ENCODE measurements at regions of chr4 and their contacts with region 1.

Region 1: GRCh38 chr4:109702950-109703663 is at the start of gene CASP6:
- DNase-seq: peak; percentile 62 to 90 (median 73)
- ATAC-seq: peak; percentile 90
- H3K4me3 ChIP-seq: peak within 1 kb of the TSS; percentile 80
- H3K4me3 Mint-ChIP-seq: peak within 1 kb of the TSS; percentile 97
- H3K27ac ChIP-seq: peak within 1 kb of the TSS; percentile 39 to 60
- H3K27ac Mint-ChIP-seq: peak within 1 kb of the TSS; percentile 96
- H3K4me1 ChIP-seq: peaks cover 33% of the 10 kb centered on the region
- H3K4me1 Mint-ChIP-seq: peaks cover 50% of the 10 kb centered on the region
- H3K27me3 ChIP-seq: no peaks in the 10 kb centered on the region
- H3K27me3 Mint-ChIP-seq: no peaks in the 10 kb centered on the region
- CTCF ChIP-seq: peak; percentile 78
- total RNA-seq, gene CASP6: 5.4 to 5.5 TPM

Region 2: GRCh38 chr4:109690690-109691410 is 12.3 kb before region 1 on chr4:
- CTCF ChIA-PET with region 1: interaction called, 3 read pairs
- POLR2A ChIA-PET with region 1: interaction called, 17 read pairs
- intact Hi-C with region 1: no loop called
- DNase-seq: peak in 4 of 14 experiments; percentile 15 to 73 (median 32)
- ATAC-seq: peak; percentile 88
- H3K4me3 ChIP-seq: no peak overlapping the region
- H3K4me3 Mint-ChIP-seq: peak overlapping the region; percentile 68
- H3K27ac ChIP-seq: peak overlapping the region; percentile 36 to 52
- H3K27ac Mint-ChIP-seq: peak overlapping the region; percentile 89
- H3K4me1 ChIP-seq: peaks cover 20% of the 10 kb centered on the region
- H3K4me1 Mint-ChIP-seq: peaks cover 42% of the 10 kb centered on the region
- H3K27me3 ChIP-seq: no peaks in the 10 kb centered on the region
- H3K27me3 Mint-ChIP-seq: no peaks in the 10 kb centered on the region
- CTCF ChIP-seq: no peak

Region 3: GRCh38 chr4:109815151-109816081 is 112.3 kb after region 1 on chr4 and contains the start of gene GAR1:
- CTCF ChIA-PET with region 1: interaction called, 3 read pairs
- POLR2A ChIA-PET with region 1: interaction called, 3 read pairs
- intact Hi-C with region 1: loop called in 1 of 2 experiments (anchors 10 kb)
- DNase-seq: peak; percentile 68 to 96 (median 82)
- ATAC-seq: peak; percentile 91
- H3K4me3 ChIP-seq: peak within 1 kb of the TSS; percentile 67
- H3K4me3 Mint-ChIP-seq: peak within 1 kb of the TSS; percentile 96
- H3K27ac ChIP-seq: peak within 1 kb of the TSS; percentile 90 to 96
- H3K27ac Mint-ChIP-seq: peak within 1 kb of the TSS; percentile 98
- H3K4me1 ChIP-seq: peaks cover 18% of the 10 kb centered on the region
- H3K4me1 Mint-ChIP-seq: peaks cover 42% of the 10 kb centered on the region
- H3K27me3 ChIP-seq: no peaks in the 10 kb centered on the region
- H3K27me3 Mint-ChIP-seq: no peaks in the 10 kb centered on the region
- CTCF ChIP-seq: no peak
- total RNA-seq, gene GAR1: 8.4 to 9.6 TPM

Region 4: DNA sequence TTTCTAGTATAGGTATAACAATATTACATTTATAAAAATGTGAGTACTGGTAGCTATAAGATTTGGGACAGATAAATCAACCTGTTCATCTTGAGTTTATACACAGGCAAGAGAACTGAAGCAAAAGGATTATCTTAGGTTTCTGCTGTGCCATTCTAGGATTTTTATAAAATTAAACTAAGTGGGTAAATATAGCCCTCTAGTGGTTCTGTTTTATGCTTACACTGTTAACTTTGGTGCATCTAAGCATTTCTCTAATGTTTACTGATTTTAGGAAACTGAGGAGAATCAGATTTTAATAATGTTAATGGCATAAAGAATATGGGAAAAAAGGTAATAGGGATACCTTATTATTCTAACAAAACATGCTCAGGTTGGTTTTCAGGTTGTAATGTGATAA is 123.6 kb after region 1 on chr4:
- CTCF ChIA-PET with region 1: interaction called, 7 read pairs
- POLR2A ChIA-PET with region 1: interaction called, 3 read pairs
- intact Hi-C with region 1: loop called in 1 of 2 experiments (anchors 1 kb)
- DNase-seq: peak in 3 of 14 experiments; percentile 39 to 43 (median 41)
- ATAC-seq: peak; percentile 62
- H3K4me3 ChIP-seq: no peak overlapping the region
- H3K4me3 Mint-ChIP-seq: no peak overlapping the region
- H3K27ac ChIP-seq: no peak overlapping the region
- H3K27ac Mint-ChIP-seq: no peak overlapping the region
- H3K4me1 ChIP-seq: no peaks in the 10 kb centered on the region
- H3K4me1 Mint-ChIP-seq: no peaks in the 10 kb centered on the region
- H3K27me3 ChIP-seq: no peaks in the 10 kb centered on the region
- H3K27me3 Mint-ChIP-seq: no peaks in the 10 kb centered on the region
- CTCF ChIP-seq: peak; percentile 64

Measured in CD4-positive, alpha-beta T cell (primary cell).